AG04449 (cell line): ENCODE measurements at regions of chr17 and their contacts with region 1.

Region 1: GRCh38 chr17:50361561-50362480 is 11.2 kb downstream of the MRPL27 start:
- DNase-seq: no peak
- H3K4me3 ChIP-seq: no peak overlapping the region
- CTCF ChIP-seq: peak; percentile 80

Region 2: GRCh38 chr17:50345432-50346312 is 16.1 kb before region 1 on chr17 and contains the start of gene XYLT2:
- CTCF ChIA-PET with region 1: interaction called, 116 read pairs
- POLR2A ChIA-PET with region 1: interaction called, 8 read pairs
- DNase-seq: no peak
- H3K4me3 ChIP-seq: peak within 1 kb of the TSS; percentile 84
- CTCF ChIP-seq: no peak

Region 3: DNA sequence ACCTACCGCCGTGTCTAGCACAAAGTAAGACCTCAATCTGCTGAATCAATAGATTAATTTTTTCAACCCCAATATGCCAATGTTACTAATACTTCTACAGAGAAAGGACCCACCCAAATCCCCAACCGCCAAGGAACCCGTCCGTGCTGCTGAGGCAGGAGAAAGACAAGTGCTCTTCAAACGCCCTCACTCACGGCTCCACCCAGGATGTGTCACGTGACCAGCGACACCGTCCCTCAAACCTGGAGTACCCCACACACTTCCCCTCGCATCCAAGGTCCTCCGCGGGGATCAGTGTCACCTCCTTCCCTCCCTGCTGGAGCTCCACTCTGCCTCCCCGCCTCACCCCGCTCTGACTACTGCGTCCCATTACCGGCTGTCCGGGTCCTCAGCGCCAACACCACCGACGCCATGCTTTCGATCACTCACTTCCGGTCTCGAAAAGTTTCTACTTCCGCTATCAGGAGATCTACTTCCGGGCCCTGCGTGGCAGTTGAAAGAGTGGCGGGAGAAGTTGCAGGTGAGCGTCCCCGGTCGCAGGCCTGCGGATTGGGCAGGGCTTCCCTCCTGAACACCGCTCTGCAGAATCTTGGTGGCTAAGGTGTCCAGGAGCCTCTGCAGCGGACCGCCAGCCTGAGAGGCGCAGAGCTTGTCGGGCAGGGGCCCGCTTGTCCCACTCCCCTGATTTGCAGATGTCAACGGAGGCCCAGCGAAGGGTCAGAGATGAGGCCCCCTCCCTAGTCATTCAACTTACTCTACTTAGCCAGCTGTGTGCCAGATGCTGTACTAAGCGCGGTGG is 11.1 kb after region 1 on chr17 and contains the starts of genes EME1 and MRPL27:
- CTCF ChIA-PET with region 1: interaction called, 60 read pairs
- POLR2A ChIA-PET with region 1: no interaction called
- DNase-seq: no peak
- H3K4me3 ChIP-seq: peak within 1 kb of the TSS; percentile 100
- CTCF ChIP-seq: no peak

Region 4: GRCh38 chr17:50547035-50547735 is 185.4 kb after region 1 on chr17 and contains the start of gene SPATA20:
- CTCF ChIA-PET with region 1: no interaction called
- POLR2A ChIA-PET with region 1: no interaction called
- DNase-seq: peak; percentile 33
- H3K4me3 ChIP-seq: peak within 1 kb of the TSS; percentile 72
- CTCF ChIP-seq: peak; percentile 94